ENCODE measurements at regions of chr3 and their contacts with region 1.

Region 1: DNA sequence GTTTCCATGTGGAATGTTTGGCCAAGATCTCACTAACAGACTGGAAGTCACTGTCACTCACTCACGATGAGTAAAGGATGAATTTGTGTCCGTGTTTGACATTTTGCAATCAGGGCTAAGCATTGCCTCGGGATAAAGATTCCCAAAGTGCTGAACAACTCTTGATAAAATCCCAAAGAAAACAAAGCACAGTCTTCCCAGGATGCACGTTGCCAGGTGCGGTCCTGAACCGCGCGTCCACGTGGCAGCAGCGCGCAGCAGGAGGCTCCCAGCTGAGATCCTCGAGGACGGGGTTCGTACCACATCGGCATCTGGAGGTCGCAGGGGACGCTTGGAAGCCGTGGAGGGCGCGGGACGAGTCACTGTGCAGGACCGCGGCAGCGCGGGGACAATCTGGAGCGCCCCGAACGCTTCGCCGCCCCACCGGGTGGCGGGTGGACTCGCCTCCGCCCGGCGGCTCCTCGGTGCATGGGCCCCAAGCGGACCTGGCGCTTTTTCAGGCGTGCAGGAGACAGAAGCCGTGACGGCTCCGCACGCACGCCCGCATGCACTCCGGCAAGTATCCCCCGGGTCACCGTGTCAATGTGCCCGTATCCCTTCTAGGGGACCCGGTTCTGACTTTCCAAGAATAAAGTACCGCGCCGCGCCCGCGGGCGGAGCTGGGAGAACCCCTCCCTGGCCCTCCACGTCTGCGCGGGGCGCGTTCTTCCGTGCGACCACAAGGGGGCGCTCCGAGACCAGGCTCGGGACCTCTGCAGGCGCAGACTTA is 17.7 kb downstream of the CPN2 start:
- DNase-seq: peak; percentile 96
- H3K4me3 ChIP-seq: peak overlapping the region; percentile 51 to 64 (median 52)
- H3K27ac ChIP-seq: no peak overlapping the region
- H3K4me1 ChIP-seq: peaks cover 24 to 32% (median 28%) of the 10 kb centered on the region in 4 donors
- H3K27me3 ChIP-seq: peaks cover 0 to 23% (median 2%) of the 10 kb centered on the region in 4 donors
- CTCF ChIP-seq: peak in 2 of 3 experiments; percentile 97 to 99
- EP300 ChIP-seq: no peak
- POLR2A ChIP-seq: no peak

Region 2: DNA sequence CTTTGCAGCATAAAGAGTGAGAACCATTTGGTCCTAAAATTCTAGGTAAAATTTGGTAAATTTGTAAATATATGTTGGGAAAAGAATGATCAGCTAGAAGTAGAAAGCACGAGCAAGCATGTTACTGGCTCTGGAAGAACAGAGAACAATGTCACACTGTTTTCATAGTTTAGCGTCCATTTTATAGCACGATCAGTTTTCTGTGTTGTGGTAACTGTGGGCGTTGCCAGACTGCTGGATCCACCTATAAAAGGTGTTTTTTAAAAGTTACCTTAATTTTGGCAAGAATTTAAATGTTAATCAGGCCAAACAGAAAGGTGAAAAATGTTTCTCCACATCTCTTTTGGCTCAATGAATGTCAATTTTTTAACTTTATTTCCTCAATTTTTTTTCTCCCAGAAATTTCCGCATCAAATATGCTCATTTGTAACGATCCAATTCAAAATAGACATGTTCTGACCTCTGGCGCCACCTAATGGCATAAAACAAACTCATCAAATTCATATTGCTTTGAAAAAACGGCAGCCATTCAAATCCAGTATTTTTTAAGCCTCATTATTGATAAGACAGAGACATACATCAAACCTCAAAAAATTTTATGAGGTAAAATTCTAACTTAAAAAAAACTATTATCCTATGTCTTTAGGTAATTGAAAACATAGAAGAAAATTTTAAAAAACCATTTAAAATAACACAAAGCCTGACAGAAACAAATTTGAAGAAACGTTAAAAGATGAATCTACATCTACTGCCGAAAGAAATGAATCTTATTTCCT is 71.2 kb after region 1 on chr3:
- intact Hi-C with region 1: loop called (anchors 1 kb)
- DNase-seq: no peak
- H3K4me3 ChIP-seq: no peak overlapping the region
- H3K27ac ChIP-seq: no peak overlapping the region
- H3K4me1 ChIP-seq: no peaks in the 10 kb centered on the region
- H3K27me3 ChIP-seq: peaks cover 0 to 7% (median 0%) of the 10 kb centered on the region in 4 donors
- CTCF ChIP-seq: peak; percentile 59 to 67 (median 64)
- EP300 ChIP-seq: no peak
- POLR2A ChIP-seq: no peak

Region 3: GRCh38 chr3:195178124-195178775 is 844.9 kb after region 1 on chr3:
- intact Hi-C with region 1: no loop called
- DNase-seq: no peak
- H3K4me3 ChIP-seq: no peak overlapping the region
- H3K27ac ChIP-seq: no peak overlapping the region
- H3K4me1 ChIP-seq: peaks cover 41 to 50% (median 47%) of the 10 kb centered on the region in 4 donors
- H3K27me3 ChIP-seq: no peaks in the 10 kb centered on the region
- CTCF ChIP-seq: no peak
- EP300 ChIP-seq: no peak
- POLR2A ChIP-seq: no peak

Measured in esophagus muscularis mucosa (tissue), 4 donors.